ENCODE measurements at regions of chr1 and their contacts with region 1.

Region 1: GRCh38 chr1:208172423-208173145 is 71.6 kb downstream of the PLXNA2 start:
- DNase-seq: no peak
- ATAC-seq: no peak
- H3K4me3 Mint-ChIP-seq: no peak overlapping the region
- H3K27ac Mint-ChIP-seq: no peak overlapping the region
- H3K4me1 Mint-ChIP-seq: no peaks in the 10 kb centered on the region
- H3K27me3 Mint-ChIP-seq: no peaks in the 10 kb centered on the region

Region 2: GRCh38 chr1:208149776-208150514 is 22.6 kb before region 1 on chr1:
- CTCF ChIA-PET with region 1: no interaction called
- POLR2A ChIA-PET with region 1: no interaction called
- intact Hi-C with region 1: loop called in 1 of 2 experiments (anchors 2 kb)
- DNase-seq: no peak
- ATAC-seq: no peak
- H3K4me3 Mint-ChIP-seq: no peak overlapping the region
- H3K27ac Mint-ChIP-seq: no peak overlapping the region
- H3K4me1 Mint-ChIP-seq: no peaks in the 10 kb centered on the region
- H3K27me3 Mint-ChIP-seq: no peaks in the 10 kb centered on the region

Region 3: GRCh38 chr1:208159555-208160258 is 12.9 kb before region 1 on chr1:
- CTCF ChIA-PET with region 1: no interaction called
- POLR2A ChIA-PET with region 1: no interaction called
- intact Hi-C with region 1: loop called in 1 of 2 experiments (anchors 1 kb)
- DNase-seq: no peak
- ATAC-seq: no peak
- H3K4me3 Mint-ChIP-seq: no peak overlapping the region
- H3K27ac Mint-ChIP-seq: no peak overlapping the region
- H3K4me1 Mint-ChIP-seq: no peaks in the 10 kb centered on the region
- H3K27me3 Mint-ChIP-seq: peaks cover 10% of the 10 kb centered on the region

Region 4: DNA sequence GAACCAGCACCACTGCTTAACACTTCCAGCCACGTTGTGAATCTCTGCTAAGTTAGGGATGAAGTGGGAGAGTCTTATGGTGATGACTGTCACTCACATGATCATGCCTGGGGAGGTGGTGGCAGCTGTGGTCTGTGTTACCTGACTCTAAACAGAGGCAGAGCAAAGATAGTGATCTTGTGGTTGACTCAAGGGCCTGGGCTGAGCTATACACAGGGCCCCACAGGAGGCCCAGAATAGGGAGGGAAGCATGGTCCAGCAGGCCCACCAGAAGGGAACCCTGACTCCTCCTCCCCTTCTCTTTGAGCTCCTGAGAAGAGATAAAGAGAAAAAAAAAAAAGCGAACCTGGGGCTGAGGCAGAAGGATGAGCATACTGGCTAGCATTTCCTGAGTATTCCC is 16.6 kb after region 1 on chr1:
- CTCF ChIA-PET with region 1: no interaction called
- POLR2A ChIA-PET with region 1: no interaction called
- intact Hi-C with region 1: no loop called
- DNase-seq: peak; percentile 13
- ATAC-seq: no peak
- H3K4me3 Mint-ChIP-seq: no peak overlapping the region
- H3K27ac Mint-ChIP-seq: no peak overlapping the region
- H3K4me1 Mint-ChIP-seq: peaks cover 9% of the 10 kb centered on the region
- H3K27me3 Mint-ChIP-seq: peaks cover 5% of the 10 kb centered on the region